ENCODE measurements at regions of chr7 and their contacts with region 1.

Region 1: DNA sequence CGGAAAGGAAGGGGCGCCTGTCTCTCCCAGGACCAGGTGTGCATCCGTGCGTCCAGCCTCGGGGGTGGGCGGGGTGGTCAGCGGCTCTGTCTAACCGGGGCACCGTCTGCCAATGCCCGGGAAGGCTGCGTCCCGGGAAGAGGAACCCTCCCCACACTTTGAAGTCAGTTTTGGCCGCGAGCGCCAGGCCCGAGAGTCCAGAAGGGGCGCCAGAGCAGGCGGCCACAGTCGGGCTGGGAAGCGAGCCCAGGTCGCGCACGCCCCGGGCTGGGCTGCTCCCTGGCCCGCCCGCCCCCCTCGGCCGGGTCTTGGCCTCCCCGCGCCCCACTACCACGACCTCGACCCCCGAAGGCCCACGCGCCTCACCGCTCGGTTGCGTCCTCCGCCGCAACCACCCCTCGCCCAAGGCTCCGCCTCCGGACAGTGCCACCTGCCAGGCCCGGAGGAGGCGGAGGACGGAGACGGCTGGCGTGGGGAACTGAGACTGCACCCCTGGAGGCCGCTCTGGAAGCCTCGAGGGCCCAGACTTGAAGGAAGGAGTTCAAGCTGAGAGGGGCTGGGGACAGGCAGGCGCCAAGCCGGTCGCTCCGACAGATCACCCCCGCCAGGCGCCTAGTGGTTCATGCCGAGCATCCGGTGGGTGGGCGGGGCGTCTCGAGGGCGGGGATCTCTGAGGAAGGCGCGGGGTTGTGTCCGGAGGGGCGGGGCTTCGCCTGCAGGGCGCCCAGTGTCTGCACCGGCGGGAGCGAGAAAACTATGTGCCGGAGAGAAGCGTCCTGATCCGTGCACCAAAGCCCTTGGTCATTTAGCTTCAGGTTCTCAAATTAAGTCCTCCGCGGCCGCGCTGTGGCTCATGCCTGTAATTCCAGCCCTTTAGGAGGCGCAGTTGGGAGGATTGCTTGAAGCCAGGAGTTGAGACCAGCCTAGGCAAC is at the start of gene BRAT1:
- DNase-seq: peak; percentile 98
- H3K4me3 Mint-ChIP-seq: peak within 1 kb of the TSS; percentile 86
- H3K27ac Mint-ChIP-seq: peak within 1 kb of the TSS; percentile 93
- H3K4me1 Mint-ChIP-seq: peaks cover 29% of the 10 kb centered on the region
- H3K27me3 Mint-ChIP-seq: no peaks in the 10 kb centered on the region
- total RNA-seq, gene BRAT1: 26.8 to 27.3 TPM

Region 2: GRCh38 chr7:2232766-2233520 is 322.4 kb before region 1 on chr7 and contains the start of gene MAD1L1:
- CTCF ChIA-PET with region 1: no interaction called
- intact Hi-C with region 1: loop called (anchors 5 kb)
- DNase-seq: peak; percentile 93
- H3K4me3 Mint-ChIP-seq: peak within 1 kb of the TSS; percentile 88
- H3K27ac Mint-ChIP-seq: peak within 1 kb of the TSS; percentile 46
- H3K4me1 Mint-ChIP-seq: peaks cover 32% of the 10 kb centered on the region
- H3K27me3 Mint-ChIP-seq: no peaks in the 10 kb centered on the region
- total RNA-seq, gene MAD1L1: 37.5 to 40.2 TPM

Region 3: GRCh38 chr7:2403014-2403717 is 152.2 kb before region 1 on chr7 and contains the start of gene CHST12:
- CTCF ChIA-PET with region 1: interaction called, 6 read pairs
- intact Hi-C with region 1: loop called (anchors 2 kb)
- DNase-seq: peak; percentile 93
- H3K4me3 Mint-ChIP-seq: peak within 1 kb of the TSS; percentile 80
- H3K27ac Mint-ChIP-seq: no peak within 1 kb of the TSS
- H3K4me1 Mint-ChIP-seq: peaks cover 40% of the 10 kb centered on the region
- H3K27me3 Mint-ChIP-seq: no peaks in the 10 kb centered on the region
- total RNA-seq, gene CHST12: 0.62 to 0.64 TPM

Region 4: DNA sequence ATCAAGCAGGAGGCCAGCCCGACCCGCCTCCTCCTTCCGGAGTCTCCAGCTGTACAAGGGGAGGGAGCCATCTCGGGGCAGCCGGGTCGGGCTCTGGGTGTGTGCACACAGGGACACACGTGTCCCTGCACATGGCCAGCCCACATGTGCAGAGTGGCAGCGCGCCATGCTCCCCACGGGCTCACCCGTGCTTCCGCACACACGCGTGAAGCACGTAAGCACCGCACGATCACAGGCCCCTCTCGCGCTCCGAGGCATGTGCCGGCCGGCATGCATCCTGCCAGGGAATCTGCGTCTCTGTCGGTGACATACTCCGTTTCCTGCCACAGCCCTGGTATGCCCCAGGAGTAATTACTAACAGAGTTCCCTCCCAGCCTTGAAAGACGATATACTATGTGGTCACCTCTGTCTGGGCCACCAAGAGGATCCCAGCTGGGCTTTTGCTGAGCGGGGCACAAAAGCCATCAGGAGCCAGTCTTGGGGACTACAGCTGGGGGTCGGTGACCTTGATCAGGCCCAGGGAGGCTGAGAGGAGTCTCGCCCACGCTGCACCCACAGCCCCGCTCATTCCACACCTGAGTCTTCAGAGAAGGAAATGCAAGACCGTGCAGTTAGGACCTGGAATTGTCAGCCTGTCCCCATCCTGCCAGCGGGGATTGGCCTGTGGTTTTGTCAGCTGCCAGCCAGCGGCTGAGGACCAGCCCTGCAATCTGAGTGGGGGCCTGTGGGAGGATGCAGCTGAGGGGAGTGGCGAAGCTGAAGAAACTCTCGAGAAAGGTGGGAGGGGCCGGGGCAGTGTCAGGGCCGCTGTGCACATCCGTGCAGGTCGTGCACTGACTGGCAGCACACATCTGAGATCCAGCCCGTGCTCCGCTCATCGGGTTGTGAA is 46.8 kb before region 1 on chr7:
- CTCF ChIA-PET with region 1: no interaction called
- intact Hi-C with region 1: loop called (anchors 1 kb)
- DNase-seq: peak; percentile 83
- H3K4me3 Mint-ChIP-seq: peak overlapping the region; percentile 59
- H3K27ac Mint-ChIP-seq: peak overlapping the region; percentile 37
- H3K4me1 Mint-ChIP-seq: peaks cover 55% of the 10 kb centered on the region
- H3K27me3 Mint-ChIP-seq: no peaks in the 10 kb centered on the region

Region 5: GRCh38 chr7:2529161-2530070 is 26.0 kb before region 1 on chr7:
- CTCF ChIA-PET with region 1: no interaction called
- intact Hi-C with region 1: loop called (anchors 1 kb)
- DNase-seq: peak; percentile 87
- H3K4me3 Mint-ChIP-seq: peak overlapping the region; percentile 68
- H3K27ac Mint-ChIP-seq: peak overlapping the region; percentile 95
- H3K4me1 Mint-ChIP-seq: peaks cover 49% of the 10 kb centered on the region
- H3K27me3 Mint-ChIP-seq: no peaks in the 10 kb centered on the region

Region 6: DNA sequence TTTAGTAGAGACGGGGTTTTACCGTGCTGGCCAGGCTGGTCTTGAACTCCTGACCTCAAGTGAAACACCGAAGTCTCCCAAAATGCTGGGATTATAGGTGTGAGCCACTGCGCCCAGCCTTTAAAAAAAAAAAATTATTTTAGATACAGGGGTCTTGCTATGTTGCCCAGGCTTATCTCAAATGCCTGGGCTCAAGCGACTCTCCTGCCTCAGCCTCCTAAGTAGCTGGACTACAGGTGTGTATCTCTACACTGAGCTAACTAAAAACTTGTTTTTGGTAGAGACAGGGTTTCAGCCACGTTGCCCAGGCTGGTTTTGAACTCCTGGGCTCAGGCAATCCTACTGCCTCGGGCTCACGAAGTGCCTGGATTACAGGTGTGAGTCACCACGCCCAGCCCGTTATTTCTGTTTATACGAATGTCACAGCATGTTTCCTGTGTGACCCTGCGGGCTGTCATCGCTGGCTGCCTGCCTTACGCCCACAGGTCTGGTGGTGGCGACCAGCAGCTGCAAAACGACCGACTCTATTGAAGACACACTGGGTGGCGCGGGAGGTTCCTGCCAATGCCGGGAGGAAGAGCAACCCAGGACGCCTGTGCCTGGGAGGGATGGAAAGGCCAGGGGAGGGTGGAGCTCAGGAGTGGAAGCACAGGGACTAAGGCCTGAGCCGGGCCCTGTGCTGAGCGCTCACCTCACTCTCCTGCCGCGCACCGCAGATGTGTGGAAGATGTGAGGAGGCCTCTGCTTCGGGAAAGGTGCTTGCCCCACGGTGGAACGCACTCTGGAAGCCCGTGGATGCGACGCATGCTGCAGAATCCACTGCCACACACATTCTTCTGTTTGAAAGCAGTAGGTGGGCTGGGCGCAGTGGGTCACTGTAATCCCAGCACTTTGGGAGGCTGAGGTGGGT is 165.4 kb after region 1 on chr7:
- CTCF ChIA-PET with region 1: no interaction called
- intact Hi-C with region 1: loop called (anchors 5 kb)
- DNase-seq: peak; percentile 95
- H3K4me3 Mint-ChIP-seq: no peak overlapping the region
- H3K27ac Mint-ChIP-seq: peak overlapping the region; percentile 13
- H3K4me1 Mint-ChIP-seq: peaks cover 47% of the 10 kb centered on the region
- H3K27me3 Mint-ChIP-seq: peaks cover 1% of the 10 kb centered on the region